Activated T-helper 2 cell treated with anti-CD3 and anti-CD28 coated beads, Interferon-gamma antibody, Interleukin-2, Interleukin-4, amounts not matched to agents 10 μg/mL and 5 μg/mL and 100 μg/mL, durations not matched to agents 14 hours and 24 hours and 36 hours (primary cell): ENCODE measurements at regions of chr20 and their contacts with region 1.

Region 1: GRCh38 chr20:13717631-13718044 is 67.1 kb downstream of the ESF1 start:
- DNase-seq: no peak
- H3K4me3 Mint-ChIP-seq: no peak overlapping the region
- H3K27ac Mint-ChIP-seq: no peak overlapping the region
- H3K4me1 Mint-ChIP-seq: peaks cover 5% of the 10 kb centered on the region
- H3K27me3 Mint-ChIP-seq: no peaks in the 10 kb centered on the region

Region 2: DNA sequence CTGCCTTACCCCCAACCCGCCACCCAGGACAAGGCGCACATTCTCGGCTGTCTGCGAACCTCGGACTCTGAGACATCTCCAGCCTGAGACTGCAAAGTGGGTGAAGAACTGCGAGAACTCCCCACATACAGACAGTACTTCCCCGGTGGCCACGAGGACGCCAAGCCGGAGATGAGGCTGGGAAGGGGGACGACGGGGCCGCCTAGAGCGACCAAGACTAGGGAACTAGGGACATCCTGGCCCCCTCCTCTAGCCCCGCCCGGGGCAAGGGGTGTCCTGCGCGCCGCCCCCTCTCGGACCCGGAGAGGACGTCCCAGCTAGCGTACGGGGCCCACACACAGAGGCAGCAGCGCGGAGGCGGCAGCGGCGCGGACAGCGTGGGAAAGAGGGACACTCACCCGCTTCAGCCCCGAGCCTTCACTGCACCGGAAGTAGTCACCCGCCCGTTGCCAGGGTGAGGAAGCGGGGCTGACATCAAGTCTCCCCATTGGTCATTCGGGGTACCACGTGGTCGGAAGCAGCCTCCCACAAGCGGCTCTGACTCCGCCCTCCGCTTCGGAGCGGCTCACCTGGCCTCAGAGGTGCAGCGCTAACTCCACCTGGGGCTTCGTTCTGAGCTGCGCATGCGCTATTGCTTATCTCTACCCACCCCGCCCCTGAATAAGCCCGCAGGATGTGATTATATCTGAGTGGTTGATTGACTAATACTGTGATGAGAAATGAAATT is 79.0 kb before region 1 on chr20 and contains the start of gene TASP1:
- intact Hi-C with region 1: loop called (anchors 10 kb)
- DNase-seq: peak; percentile 90
- H3K4me3 Mint-ChIP-seq: peak within 1 kb of the TSS; percentile 95
- H3K27ac Mint-ChIP-seq: peak within 1 kb of the TSS; percentile 72
- H3K4me1 Mint-ChIP-seq: peaks cover 21% of the 10 kb centered on the region
- H3K27me3 Mint-ChIP-seq: peaks cover 3% of the 10 kb centered on the region
- total RNA-seq, gene TASP1: 9.6 and 11.3 TPM in 2 replicates